ENCODE measurements at regions of chr20 and their contacts with region 1.

Region 1: DNA sequence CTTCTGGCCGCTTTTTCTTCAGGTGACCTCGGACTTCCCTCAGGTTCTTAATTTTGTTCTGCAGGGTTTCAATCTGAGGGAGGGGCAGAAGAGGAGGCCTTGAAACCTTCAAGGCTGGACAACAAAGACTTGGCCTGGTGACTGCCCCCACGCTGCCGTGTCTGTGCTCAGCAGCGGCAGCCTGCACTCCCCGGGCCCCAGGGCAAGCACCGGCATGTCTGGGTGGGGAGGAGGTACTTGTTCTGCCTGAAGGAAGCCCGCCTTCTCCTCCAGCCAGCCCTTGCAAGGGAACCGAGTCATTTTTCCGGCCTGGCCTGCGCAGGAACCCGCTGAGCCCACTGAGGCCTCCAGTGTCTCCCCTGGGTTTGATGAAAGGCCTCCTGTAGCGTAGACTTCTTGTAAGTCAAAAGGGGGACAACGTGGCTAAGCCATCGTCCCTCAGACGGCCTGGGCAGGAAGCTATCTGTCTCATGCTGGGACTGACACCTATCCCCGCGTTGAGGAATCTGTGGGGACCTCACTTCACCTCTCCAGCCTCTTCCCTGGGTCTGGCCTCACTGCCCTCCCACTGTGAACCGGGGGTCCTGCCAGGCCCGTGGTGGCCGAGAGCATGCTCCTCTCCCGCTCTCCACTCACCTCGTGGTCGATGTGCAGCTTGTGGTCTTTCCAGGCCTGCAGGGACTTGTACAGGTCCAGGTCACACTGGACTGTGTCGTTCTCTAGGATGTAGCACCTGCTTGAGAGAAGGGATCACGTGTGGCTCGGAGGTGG is 119.9 kb downstream of the SULF2 start:
- DNase-seq: no peak
- ATAC-seq: no peak
- H3K4me3 ChIP-seq: no peak overlapping the region
- H3K27ac ChIP-seq: no peak overlapping the region
- H3K4me1 ChIP-seq: peaks cover 0 to 4% (median 0%) of the 10 kb centered on the region in 4 donors
- H3K27me3 ChIP-seq: no peaks in the 10 kb centered on the region
- CTCF ChIP-seq: no peak
- POLR2A ChIP-seq: no peak

Region 2: GRCh38 chr20:48626226-48626937 is 961.0 kb after region 1 on chr20:
- intact Hi-C with region 1: loop called in 1 of 2 experiments (anchors 5 kb)
- DNase-seq: peak in 2 of 3 donors; percentile 22 to 52
- ATAC-seq: no peak
- H3K4me3 ChIP-seq: no peak overlapping the region
- H3K27ac ChIP-seq: no peak overlapping the region
- H3K4me1 ChIP-seq: no peaks in the 10 kb centered on the region
- H3K27me3 ChIP-seq: no peaks in the 10 kb centered on the region
- CTCF ChIP-seq: no peak
- POLR2A ChIP-seq: no peak